ENCODE measurements at regions of chr7 and their contacts with region 1.

Region 1: GRCh38 chr7:40622941-40623501 is 488.2 kb downstream of the SUGCT start:
- DNase-seq: no peak
- H3K4me3 Mint-ChIP-seq: no peak overlapping the region
- H3K27ac Mint-ChIP-seq: no peak overlapping the region
- H3K4me1 Mint-ChIP-seq: no peaks in the 10 kb centered on the region
- H3K27me3 Mint-ChIP-seq: no peaks in the 10 kb centered on the region
- CTCF ChIP-seq: no peak

Region 2: DNA sequence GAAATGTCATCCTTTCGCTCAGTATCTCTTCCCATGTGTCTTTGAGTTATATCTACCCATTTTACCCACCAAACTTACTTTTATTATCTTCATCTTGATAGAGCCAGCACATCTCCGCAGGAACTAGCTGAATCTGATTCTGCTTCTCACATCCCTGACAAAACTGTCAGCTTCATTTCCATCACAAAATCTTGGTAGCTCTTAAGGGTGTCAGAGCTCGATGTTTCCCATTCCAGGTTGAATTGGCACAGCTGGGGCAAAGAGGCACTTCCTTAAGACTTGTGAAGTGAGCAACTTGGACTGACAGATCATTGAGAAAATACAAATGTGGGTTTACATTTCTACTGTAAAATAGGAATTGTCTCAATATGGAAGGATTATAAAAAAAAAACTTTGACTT is 53.7 kb before region 1 on chr7:
- CTCF ChIA-PET with region 1: no interaction called
- intact Hi-C with region 1: loop called (anchors 10 kb)
- DNase-seq: no peak
- H3K4me3 Mint-ChIP-seq: no peak overlapping the region
- H3K27ac Mint-ChIP-seq: no peak overlapping the region
- H3K4me1 Mint-ChIP-seq: no peaks in the 10 kb centered on the region
- H3K27me3 Mint-ChIP-seq: no peaks in the 10 kb centered on the region
- CTCF ChIP-seq: no peak